ENCODE measurements at regions of chr13 and their contacts with region 1.

Region 1: DNA sequence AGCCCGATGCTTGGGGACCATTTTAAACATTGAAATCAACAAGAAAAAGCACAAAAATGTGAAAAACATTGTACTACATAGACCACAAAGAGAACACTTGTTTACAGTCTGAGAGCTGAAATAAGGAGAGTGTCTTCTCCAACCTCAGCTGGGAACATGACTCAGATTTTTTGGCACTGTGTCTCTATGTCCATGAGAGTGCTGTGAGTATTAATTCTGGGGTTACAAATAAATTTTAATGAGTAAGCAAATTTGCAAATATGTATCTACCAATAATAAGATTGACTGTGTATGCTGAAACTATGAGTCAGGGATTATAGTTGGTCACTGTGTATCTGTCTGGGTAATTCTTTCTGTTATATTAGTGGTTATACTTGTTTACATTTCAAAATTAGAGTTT is 174.0 kb downstream of the DCT start:
- DNase-seq: peak; percentile 93
- ATAC-seq: peak; percentile 84
- H3K4me3 ChIP-seq: peak overlapping the region; percentile 53; the same call in 1 of the 2 replicates
- H3K27ac ChIP-seq: peak overlapping the region; percentile 97
- H3K4me1 ChIP-seq: peaks cover 43% of the 10 kb centered on the region
- H3K27me3 ChIP-seq: no peaks in the 10 kb centered on the region
- CTCF ChIP-seq: no peak

Region 2: GRCh38 chr13:94087100-94087499 is 218.4 kb before region 1 on chr13:
- CTCF ChIA-PET with region 1: no interaction called
- POLR2A ChIA-PET with region 1: no interaction called
- intact Hi-C with region 1: no loop called
- DNase-seq: no peak
- ATAC-seq: no peak
- H3K4me3 ChIP-seq: no peak overlapping the region
- H3K27ac ChIP-seq: no peak overlapping the region
- H3K4me1 ChIP-seq: no peaks in the 10 kb centered on the region
- H3K27me3 ChIP-seq: no peaks in the 10 kb centered on the region
- CTCF ChIP-seq: no peak

Region 3: GRCh38 chr13:94209117-94209516 is 96.3 kb before region 1 on chr13:
- CTCF ChIA-PET with region 1: no interaction called
- POLR2A ChIA-PET with region 1: no interaction called
- intact Hi-C with region 1: loop called (anchors 1 kb)
- DNase-seq: peak; percentile 64
- ATAC-seq: peak; percentile 99
- H3K4me3 ChIP-seq: no peak overlapping the region
- H3K27ac ChIP-seq: no peak overlapping the region
- H3K4me1 ChIP-seq: peaks cover 4% of the 10 kb centered on the region
- H3K27me3 ChIP-seq: no peaks in the 10 kb centered on the region
- CTCF ChIP-seq: no peak